ENCODE measurements at regions of chr3 and their contacts with region 1.

Region 1: GRCh38 chr3:151168269-151169094 is 34.5 kb downstream of the GPR171 start:
- DNase-seq: peak; percentile 72 to 89 (median 79)
- ATAC-seq: peak; percentile 63
- H3K4me3 ChIP-seq: no peak overlapping the region
- H3K4me3 Mint-ChIP-seq: no peak overlapping the region
- H3K27ac ChIP-seq: no peak overlapping the region
- H3K27ac Mint-ChIP-seq: no peak overlapping the region
- H3K4me1 ChIP-seq: peaks cover 41% of the 10 kb centered on the region
- H3K4me1 Mint-ChIP-seq: peaks cover 43% of the 10 kb centered on the region
- H3K27me3 ChIP-seq: no peaks in the 10 kb centered on the region
- H3K27me3 Mint-ChIP-seq: no peaks in the 10 kb centered on the region
- CTCF ChIP-seq: peak; percentile 97

Region 2: DNA sequence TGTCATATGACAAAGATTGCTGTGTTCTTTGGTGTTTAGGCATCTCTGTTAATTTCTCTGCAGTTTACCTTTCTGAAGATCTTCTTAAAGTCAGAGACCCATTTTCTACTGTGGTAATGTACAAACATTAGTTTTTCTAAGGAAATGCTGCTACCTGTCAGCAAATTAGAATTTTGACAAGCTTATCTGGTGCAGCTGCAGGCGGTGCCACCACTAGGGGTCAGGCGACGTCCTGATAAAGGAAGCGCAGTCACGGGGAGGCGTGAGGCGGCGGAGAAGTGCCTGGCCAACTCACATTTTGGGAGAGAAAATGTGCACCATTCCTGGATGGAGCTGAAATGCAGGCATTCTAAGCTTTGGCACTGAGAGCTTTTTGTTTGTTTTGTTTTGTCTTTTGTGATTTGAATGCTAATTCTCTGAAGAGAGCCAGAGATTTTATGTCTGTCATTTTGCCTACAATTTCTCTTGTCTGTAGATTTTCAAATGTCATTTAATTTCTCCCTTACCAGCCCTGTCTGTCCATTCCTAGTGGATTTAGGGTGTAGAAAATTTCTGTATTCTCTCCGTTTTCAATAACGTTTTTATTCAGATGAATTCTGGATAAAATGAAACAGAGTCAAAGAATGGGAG is 380.6 kb before region 1 on chr3:
- CTCF ChIA-PET with region 1: no interaction called
- POLR2A ChIA-PET with region 1: no interaction called
- intact Hi-C with region 1: no loop called
- DNase-seq: peak; percentile 63 to 85 (median 72)
- ATAC-seq: peak; percentile 86
- H3K4me3 ChIP-seq: no peak overlapping the region
- H3K4me3 Mint-ChIP-seq: no peak overlapping the region
- H3K27ac ChIP-seq: no peak overlapping the region
- H3K27ac Mint-ChIP-seq: no peak overlapping the region
- H3K4me1 ChIP-seq: peaks cover 3% of the 10 kb centered on the region
- H3K4me1 Mint-ChIP-seq: no peaks in the 10 kb centered on the region
- H3K27me3 ChIP-seq: no peaks in the 10 kb centered on the region
- H3K27me3 Mint-ChIP-seq: peaks cover 7% of the 10 kb centered on the region
- CTCF ChIP-seq: peak; percentile 98

Region 3: DNA sequence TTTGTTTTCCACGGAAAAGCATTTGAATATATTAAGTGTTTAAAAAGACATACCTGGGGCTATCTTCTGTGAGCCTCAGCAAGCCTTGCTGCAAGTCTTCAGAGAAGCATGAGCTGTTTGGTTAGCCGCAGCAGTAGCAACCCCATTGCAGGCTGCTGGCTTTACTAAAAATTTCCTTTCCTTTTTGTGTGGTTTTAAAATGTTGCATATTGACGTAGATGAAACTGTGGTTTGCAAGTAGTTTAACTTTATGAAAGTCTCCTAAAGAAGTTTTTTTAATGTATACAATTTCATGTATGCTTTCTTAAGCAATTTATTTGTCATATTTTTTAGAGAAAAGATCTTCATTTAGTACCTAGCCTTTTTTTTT is 34.6 kb after region 1 on chr3 and contains the start of gene GPR171:
- CTCF ChIA-PET with region 1: interaction called, 15 read pairs
- POLR2A ChIA-PET with region 1: interaction called, 16 read pairs
- intact Hi-C with region 1: loop called (anchors 2 kb)
- DNase-seq: peak; percentile 42 to 89 (median 60)
- ATAC-seq: peak; percentile 88
- H3K4me3 ChIP-seq: peak within 1 kb of the TSS; percentile 61
- H3K4me3 Mint-ChIP-seq: peak within 1 kb of the TSS; percentile 68
- H3K27ac ChIP-seq: peak within 1 kb of the TSS; percentile 63 to 78
- H3K27ac Mint-ChIP-seq: peak within 1 kb of the TSS; percentile 85
- H3K4me1 ChIP-seq: peaks cover 38% of the 10 kb centered on the region
- H3K4me1 Mint-ChIP-seq: peaks cover 78% of the 10 kb centered on the region
- H3K27me3 ChIP-seq: no peaks in the 10 kb centered on the region
- H3K27me3 Mint-ChIP-seq: no peaks in the 10 kb centered on the region
- CTCF ChIP-seq: no peak
- total RNA-seq, gene GPR171: 9.7 to 16.7 TPM

Region 4: GRCh38 chr3:151227807-151228665 is 59.6 kb after region 1 on chr3:
- CTCF ChIA-PET with region 1: interaction called, 25 read pairs
- POLR2A ChIA-PET with region 1: interaction called, 5 read pairs
- intact Hi-C with region 1: loop called (anchors 1 kb)
- DNase-seq: peak; percentile 61 to 89 (median 72)
- ATAC-seq: peak; percentile 91
- H3K4me3 ChIP-seq: no peak overlapping the region
- H3K4me3 Mint-ChIP-seq: no peak overlapping the region
- H3K27ac ChIP-seq: no peak overlapping the region
- H3K27ac Mint-ChIP-seq: no peak overlapping the region
- H3K4me1 ChIP-seq: peaks cover 31% of the 10 kb centered on the region
- H3K4me1 Mint-ChIP-seq: peaks cover 40% of the 10 kb centered on the region
- H3K27me3 ChIP-seq: no peaks in the 10 kb centered on the region
- H3K27me3 Mint-ChIP-seq: no peaks in the 10 kb centered on the region
- CTCF ChIP-seq: peak; percentile 88

Region 5: GRCh38 chr3:151282921-151283320 is 114.4 kb after region 1 on chr3:
- CTCF ChIA-PET with region 1: interaction called, 65 read pairs
- POLR2A ChIA-PET with region 1: interaction called, 5 read pairs
- intact Hi-C with region 1: loop called (anchors 1 kb)
- DNase-seq: peak in 3 of 14 experiments; percentile 72 to 79 (median 78)
- ATAC-seq: peak; percentile 68
- H3K4me3 ChIP-seq: no peak overlapping the region
- H3K4me3 Mint-ChIP-seq: no peak overlapping the region
- H3K27ac ChIP-seq: no peak overlapping the region
- H3K27ac Mint-ChIP-seq: no peak overlapping the region
- H3K4me1 ChIP-seq: peaks cover 11% of the 10 kb centered on the region
- H3K4me1 Mint-ChIP-seq: peaks cover 27% of the 10 kb centered on the region
- H3K27me3 ChIP-seq: no peaks in the 10 kb centered on the region
- H3K27me3 Mint-ChIP-seq: no peaks in the 10 kb centered on the region
- CTCF ChIP-seq: peak; percentile 83

Region 6: GRCh38 chr3:151327571-151328198 is 159.2 kb after region 1 on chr3:
- CTCF ChIA-PET with region 1: interaction called, 6 read pairs
- POLR2A ChIA-PET with region 1: no interaction called
- intact Hi-C with region 1: loop called in 1 of 2 experiments (anchors 2 kb)
- DNase-seq: no peak
- ATAC-seq: no peak
- H3K4me3 ChIP-seq: peak overlapping the region; percentile 34
- H3K4me3 Mint-ChIP-seq: no peak overlapping the region
- H3K27ac ChIP-seq: no peak overlapping the region
- H3K27ac Mint-ChIP-seq: no peak overlapping the region
- H3K4me1 ChIP-seq: no peaks in the 10 kb centered on the region
- H3K4me1 Mint-ChIP-seq: no peaks in the 10 kb centered on the region
- H3K27me3 ChIP-seq: no peaks in the 10 kb centered on the region
- H3K27me3 Mint-ChIP-seq: peaks cover 19% of the 10 kb centered on the region
- CTCF ChIP-seq: peak; percentile 73